ENCODE measurements at regions of chr1 and their contacts with region 1.

Region 1: DNA sequence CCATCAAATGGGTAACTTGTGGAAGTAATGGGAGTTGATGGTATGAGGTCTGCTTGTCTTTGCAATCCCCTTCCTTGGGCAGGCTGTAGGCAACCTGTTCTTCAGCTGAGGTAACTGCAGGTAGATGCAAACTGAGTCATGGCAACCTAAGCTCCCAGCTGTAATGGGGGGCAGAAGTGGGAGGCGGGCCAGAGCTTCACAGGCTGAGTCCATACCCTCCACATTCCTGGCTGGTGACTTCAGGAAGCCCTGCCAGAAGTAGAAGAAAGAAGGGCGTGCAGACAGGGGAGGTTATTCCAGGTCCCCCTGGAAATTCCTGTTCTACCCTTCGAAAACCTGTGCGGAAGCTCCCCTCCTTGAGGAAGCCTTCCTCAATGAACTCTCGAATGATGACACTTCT is 44.9 kb downstream of the ARHGEF11 start:
- DNase-seq: peak; percentile 45 to 76
- H3K4me3 ChIP-seq: no peak overlapping the region
- H3K27ac ChIP-seq: no peak overlapping the region
- H3K4me1 ChIP-seq: peaks cover 13% of the 10 kb centered on the region; the same call in 1 of the 2 replicates
- H3K27me3 ChIP-seq: no peaks in the 10 kb centered on the region
- CTCF ChIP-seq: no peak

Region 2: GRCh38 chr1:156876281-156876680 is 124.4 kb before region 1 on chr1:
- CTCF ChIA-PET with region 1: no interaction called
- POLR2A ChIA-PET with region 1: no interaction called
- intact Hi-C with region 1: no loop called
- DNase-seq: no peak
- H3K4me3 ChIP-seq: no peak overlapping the region
- H3K27ac ChIP-seq: no peak overlapping the region
- H3K4me1 ChIP-seq: peaks cover 3% of the 10 kb centered on the region; the same call in 1 of the 2 replicates
- H3K27me3 ChIP-seq: peaks cover 39% of the 10 kb centered on the region
- CTCF ChIP-seq: no peak

Region 3: GRCh38 chr1:157045251-157046218 is 44.8 kb after region 1 on chr1 and contains the start of gene ARHGEF11:
- CTCF ChIA-PET with region 1: no interaction called
- POLR2A ChIA-PET with region 1: no interaction called
- intact Hi-C with region 1: loop called (anchors 2 kb)
- DNase-seq: peak; percentile 57 to 94
- H3K4me3 ChIP-seq: peak within 1 kb of the TSS; percentile 70
- H3K27ac ChIP-seq: peak within 1 kb of the TSS; percentile 42; the same call in 1 of the 2 replicates
- H3K4me1 ChIP-seq: peaks cover 37% of the 10 kb centered on the region
- H3K27me3 ChIP-seq: no peaks in the 10 kb centered on the region
- CTCF ChIP-seq: no peak
- total RNA-seq, gene ARHGEF11: 25.2 and 31.5 TPM in 2 replicates

Region 4: DNA sequence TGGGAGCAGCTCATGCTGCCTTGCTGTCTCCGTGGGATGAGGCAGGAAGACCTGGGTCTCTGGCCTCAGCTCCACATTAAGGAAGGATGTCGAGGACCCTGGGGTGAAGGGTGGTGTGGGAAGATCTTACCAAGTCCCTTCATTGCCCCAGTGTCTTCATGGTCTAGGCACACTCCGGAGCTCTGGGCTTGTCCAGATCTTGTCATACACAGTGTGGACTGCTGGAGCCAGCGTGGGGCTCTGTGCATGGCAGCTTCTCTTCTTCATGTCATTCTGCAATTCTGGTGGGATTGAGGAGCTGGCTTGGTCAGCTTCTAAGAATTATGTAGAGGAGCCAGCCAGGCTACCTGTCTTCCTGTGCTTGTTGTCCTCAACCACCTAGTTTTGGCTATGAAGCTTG is 216.8 kb after region 1 on chr1:
- CTCF ChIA-PET with region 1: no interaction called
- POLR2A ChIA-PET with region 1: no interaction called
- intact Hi-C with region 1: no loop called
- DNase-seq: no peak
- H3K4me3 ChIP-seq: no peak overlapping the region
- H3K27ac ChIP-seq: no peak overlapping the region
- H3K4me1 ChIP-seq: no peaks in the 10 kb centered on the region
- H3K27me3 ChIP-seq: peaks cover 48% of the 10 kb centered on the region
- CTCF ChIP-seq: no peak